HCT116 (cell line): ENCODE measurements at regions of chr12 and their contacts with region 1.

Region 1: GRCh38 chr12:62581288-62582064 is 114.8 kb downstream of the MON2 start:
- DNase-seq: peak; percentile 38
- ATAC-seq: peak; percentile 84
- H3K4me3 ChIP-seq: no peak overlapping the region
- H3K27ac ChIP-seq: no peak overlapping the region
- H3K4me1 ChIP-seq: no peaks in the 10 kb centered on the region
- H3K27me3 ChIP-seq: no peaks in the 10 kb centered on the region
- CTCF ChIP-seq: peak; percentile 67 to 73 (median 73); a peak in 5 of 6 replicates
- POLR2A ChIP-seq: no peak
- RAD21 ChIP-seq: peak; percentile 79

Region 2: GRCh38 chr12:62372137-62372536 is 209.3 kb before region 1 on chr12:
- CTCF ChIA-PET with region 1: no interaction called
- POLR2A ChIA-PET with region 1: no interaction called
- RAD21 ChIA-PET with region 1: no interaction called
- intact Hi-C with region 1: no loop called
- DNase-seq: no peak
- ATAC-seq: no peak
- H3K4me3 ChIP-seq: no peak overlapping the region
- H3K27ac ChIP-seq: no peak overlapping the region
- H3K4me1 ChIP-seq: no peaks in the 10 kb centered on the region
- H3K27me3 ChIP-seq: no peaks in the 10 kb centered on the region
- CTCF ChIP-seq: no peak
- POLR2A ChIP-seq: no peak
- RAD21 ChIP-seq: no peak

Region 3: DNA sequence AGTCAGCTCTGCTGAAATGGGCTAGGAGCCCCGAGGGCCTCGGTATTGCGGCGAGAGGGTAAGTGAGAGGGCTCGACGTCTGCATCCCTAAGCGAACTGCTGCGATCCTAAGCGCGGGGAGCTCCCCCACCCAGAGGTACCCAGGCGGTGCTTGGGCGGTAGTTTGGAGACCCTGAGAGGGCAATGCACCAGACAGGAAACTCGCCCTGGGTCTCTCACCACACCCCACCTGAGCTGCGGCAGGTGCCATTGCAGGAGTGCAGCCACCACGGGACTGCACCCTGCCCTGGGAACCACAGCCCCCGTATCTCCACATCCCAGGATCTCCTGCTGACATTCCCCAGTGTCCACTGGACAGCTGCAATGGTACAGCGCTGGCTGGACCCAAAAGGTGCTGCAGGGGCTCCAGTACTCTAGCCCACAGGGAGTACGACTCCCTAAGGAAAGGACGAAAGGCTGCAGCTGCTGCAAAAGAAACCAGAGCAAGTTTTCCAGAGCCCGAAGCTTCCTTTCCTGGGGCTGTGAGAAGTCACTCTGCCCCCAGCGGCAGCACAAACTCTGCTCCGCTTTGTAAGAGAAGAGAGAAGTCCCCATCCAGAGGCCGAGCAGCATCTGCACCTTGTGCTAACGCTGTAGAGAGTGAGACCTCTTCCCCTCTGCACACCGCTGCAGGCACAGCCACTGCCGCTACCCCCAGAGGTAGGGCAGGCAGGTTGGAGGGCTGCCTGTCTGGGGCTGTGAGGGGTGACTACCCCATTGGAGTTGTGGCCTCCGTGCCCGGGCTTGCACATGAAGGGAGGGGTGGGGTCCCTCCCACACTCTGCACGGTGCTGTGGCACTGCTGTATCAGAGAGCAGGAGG is 145.9 kb before region 1 on chr12:
- CTCF ChIA-PET with region 1: interaction called, 5 read pairs
- POLR2A ChIA-PET with region 1: no interaction called
- RAD21 ChIA-PET with region 1: no interaction called
- intact Hi-C with region 1: loop called (anchors 5 kb)
- DNase-seq: no peak
- ATAC-seq: no peak
- H3K4me3 ChIP-seq: no peak overlapping the region
- H3K27ac ChIP-seq: no peak overlapping the region
- H3K4me1 ChIP-seq: no peaks in the 10 kb centered on the region
- H3K27me3 ChIP-seq: no peaks in the 10 kb centered on the region
- CTCF ChIP-seq: no peak
- POLR2A ChIP-seq: no peak
- RAD21 ChIP-seq: no peak

Region 4: DNA sequence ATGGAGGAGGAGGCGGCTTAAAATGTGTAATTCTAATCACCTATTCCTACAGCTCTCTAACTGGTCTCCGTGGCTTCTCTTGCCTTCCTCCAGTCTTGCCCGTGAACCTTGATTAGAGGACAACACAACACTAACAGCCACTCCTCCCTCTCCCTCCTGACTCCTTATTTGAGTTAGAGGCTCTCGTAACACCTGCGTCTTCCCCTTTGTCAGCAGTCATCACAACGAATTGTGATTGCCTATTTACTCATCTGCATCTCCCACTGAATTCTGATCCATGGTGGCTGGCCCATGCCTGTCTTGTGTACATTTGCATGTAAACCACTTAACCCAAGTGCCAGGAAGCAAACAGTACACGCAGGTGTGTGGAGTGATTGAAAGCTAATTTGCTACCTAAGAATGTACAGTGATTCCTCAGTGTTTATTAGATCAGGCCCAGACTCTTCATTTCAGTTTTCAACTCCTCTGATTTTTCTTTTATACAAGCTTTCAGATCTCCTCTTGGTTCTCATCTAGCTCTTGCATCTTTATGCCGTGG is 39.7 kb after region 1 on chr12:
- CTCF ChIA-PET with region 1: no interaction called
- POLR2A ChIA-PET with region 1: no interaction called
- RAD21 ChIA-PET with region 1: no interaction called
- intact Hi-C with region 1: no loop called
- DNase-seq: no peak
- ATAC-seq: no peak
- H3K4me3 ChIP-seq: no peak overlapping the region
- H3K27ac ChIP-seq: no peak overlapping the region
- H3K4me1 ChIP-seq: peaks cover 0 to 3% of the 10 kb centered on the region in 2 experiments; a peak in 1 of 4 replicates
- H3K27me3 ChIP-seq: no peaks in the 10 kb centered on the region
- CTCF ChIP-seq: no peak
- POLR2A ChIP-seq: no peak
- RAD21 ChIP-seq: no peak

Region 5: DNA sequence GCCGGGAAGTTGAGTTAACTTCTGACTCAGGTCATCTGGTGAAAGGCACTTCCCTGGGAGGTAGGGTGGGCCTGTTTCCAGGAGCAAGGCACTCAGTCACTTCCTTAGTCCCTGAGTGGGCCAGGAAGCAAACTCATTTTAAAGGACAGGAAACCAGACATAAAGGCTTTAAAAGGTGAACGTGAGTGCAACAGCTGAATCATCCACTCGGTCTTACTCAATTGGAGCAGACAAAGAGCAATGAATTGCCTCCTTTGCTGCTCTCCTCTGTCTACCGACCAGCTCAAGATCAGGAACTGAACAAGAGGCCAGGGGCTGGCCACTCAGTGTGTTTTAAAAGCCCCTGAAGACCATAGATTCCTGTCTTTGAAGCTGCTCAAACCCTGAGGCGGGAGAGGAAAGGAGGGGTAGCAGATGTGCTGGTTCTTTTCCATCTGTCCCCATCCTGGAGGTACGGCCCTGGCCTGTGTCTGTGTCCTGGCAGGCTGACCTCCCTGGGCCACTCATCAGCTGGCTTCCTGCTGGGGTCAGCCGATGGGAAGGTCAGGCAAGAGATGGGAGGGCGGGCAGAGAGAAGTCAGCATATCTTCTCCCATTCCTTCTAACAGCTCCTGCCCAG is 204.6 kb after region 1 on chr12:
- CTCF ChIA-PET with region 1: interaction called, 11 read pairs
- POLR2A ChIA-PET with region 1: no interaction called
- RAD21 ChIA-PET with region 1: interaction called in 1 of 2 experiments, 3 read pairs
- intact Hi-C with region 1: no loop called
- DNase-seq: peak; percentile 86
- ATAC-seq: peak; percentile 87
- H3K4me3 ChIP-seq: peak overlapping the region in 1 of 2 experiments; percentile 23; a peak in 2 of 4 replicates
- H3K27ac ChIP-seq: peak overlapping the region; percentile 55
- H3K4me1 ChIP-seq: peaks cover 9 to 35% of the 10 kb centered on the region in 2 experiments
- H3K27me3 ChIP-seq: no peaks in the 10 kb centered on the region
- CTCF ChIP-seq: no peak
- POLR2A ChIP-seq: no peak
- RAD21 ChIP-seq: peak; percentile 45

Region 6: DNA sequence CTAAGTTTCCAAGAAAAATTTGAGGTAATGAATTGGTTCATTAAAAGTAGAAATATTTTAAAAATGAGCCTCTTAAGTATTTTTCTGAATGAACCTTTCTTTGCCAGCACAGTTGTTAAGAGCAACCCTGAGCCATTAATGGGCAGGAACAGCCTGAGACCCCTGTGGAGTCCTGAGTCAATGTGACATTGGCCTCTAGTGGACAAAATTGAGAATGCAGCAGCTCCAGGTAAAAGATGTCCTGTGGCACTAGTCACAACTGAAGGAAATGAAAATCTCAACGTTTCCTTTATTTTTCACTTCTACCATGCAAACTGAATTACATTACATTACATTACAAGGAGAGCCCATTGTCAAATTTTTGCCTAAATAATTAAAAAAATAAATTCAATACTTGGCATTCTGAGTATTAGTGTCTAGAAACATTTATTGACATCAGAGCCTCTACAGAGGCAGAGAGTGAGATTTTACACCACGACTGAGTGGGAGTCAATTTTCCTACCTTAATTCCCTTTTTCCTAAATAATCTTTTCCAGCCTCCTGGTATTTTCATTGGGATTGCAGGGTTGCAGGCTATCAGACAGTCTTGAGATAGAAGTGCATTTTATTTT is 217.8 kb after region 1 on chr12:
- CTCF ChIA-PET with region 1: interaction called, 79 read pairs
- POLR2A ChIA-PET with region 1: no interaction called
- RAD21 ChIA-PET with region 1: interaction called, 6 read pairs
- intact Hi-C with region 1: loop called (anchors 1 kb)
- DNase-seq: peak; percentile 48
- ATAC-seq: peak; percentile 90
- H3K4me3 ChIP-seq: no peak overlapping the region
- H3K27ac ChIP-seq: no peak overlapping the region
- H3K4me1 ChIP-seq: peaks cover 0 to 3% of the 10 kb centered on the region in 2 experiments; a peak in 1 of 4 replicates
- H3K27me3 ChIP-seq: no peaks in the 10 kb centered on the region
- CTCF ChIP-seq: peak; percentile 82 to 96 (median 88)
- POLR2A ChIP-seq: no peak
- RAD21 ChIP-seq: peak; percentile 91